Activated CD4-positive, alpha-beta T cell treated with anti-CD3 and anti-CD28 coated beads, Interleukin-2, amount 10 ng/mL, durations not matched to agents 24 days and 14 days (primary cell): ENCODE measurements at regions of chr13 and their contacts with region 1.

Region 1: DNA sequence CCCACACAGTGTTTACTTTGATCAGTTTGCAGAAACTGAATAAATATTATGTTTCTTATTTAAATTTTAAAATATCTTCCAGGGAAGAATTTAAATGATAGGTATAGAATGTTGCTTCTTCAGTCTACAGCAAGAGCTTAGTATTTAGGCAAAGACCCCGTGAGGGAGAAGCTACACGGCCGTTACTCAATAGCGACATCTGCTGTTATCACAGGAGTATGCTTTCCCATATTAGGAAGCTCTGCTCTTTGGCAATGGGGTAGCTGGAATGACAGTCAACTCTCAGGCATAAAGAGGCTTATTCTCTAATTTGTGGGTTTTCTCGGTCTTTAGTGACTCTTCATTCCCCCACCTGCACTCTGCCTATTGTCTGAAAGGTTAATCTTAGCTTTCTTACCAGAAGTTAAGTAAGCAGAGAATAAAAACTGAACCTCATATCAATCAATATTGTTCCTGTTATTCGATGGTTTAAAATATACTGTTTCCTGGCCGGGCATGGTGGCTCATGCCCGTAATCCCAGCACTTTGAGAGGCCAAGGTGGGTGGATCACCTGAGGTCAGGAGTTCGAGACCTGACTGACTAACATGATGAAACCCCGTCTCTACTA is 13.2 kb upstream of the LHFPL6 start:
- DNase-seq: peak; percentile 81
- H3K4me3 Mint-ChIP-seq: no peak overlapping the region
- H3K27ac Mint-ChIP-seq: no peak overlapping the region
- H3K4me1 Mint-ChIP-seq: no peaks in the 10 kb centered on the region
- H3K27me3 Mint-ChIP-seq: peaks cover 24% of the 10 kb centered on the region

Region 2: DNA sequence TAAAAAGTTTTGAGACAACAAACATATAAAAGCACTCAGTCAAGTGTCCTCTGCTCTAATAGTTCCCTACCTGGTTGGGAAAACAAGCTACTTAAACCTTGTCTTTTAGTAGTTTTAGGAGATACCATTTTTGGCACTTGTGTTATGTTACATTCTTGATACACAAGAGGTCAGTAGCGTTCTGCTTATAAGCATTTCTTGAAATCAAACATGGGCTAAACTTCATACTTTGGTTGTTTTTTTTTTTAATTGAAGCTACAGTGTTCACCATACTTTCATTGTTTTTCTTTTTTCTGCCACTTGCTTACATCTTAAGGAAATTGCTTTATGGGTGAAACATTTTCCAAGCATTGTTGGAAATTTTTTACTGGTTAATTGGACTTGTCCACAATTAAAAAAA is 565.0 kb before region 1 on chr13:
- intact Hi-C with region 1: loop called (anchors 1 kb)
- DNase-seq: no peak
- H3K4me3 Mint-ChIP-seq: no peak overlapping the region
- H3K27ac Mint-ChIP-seq: no peak overlapping the region
- H3K4me1 Mint-ChIP-seq: peaks cover 2% of the 10 kb centered on the region
- H3K27me3 Mint-ChIP-seq: no peaks in the 10 kb centered on the region

Region 3: DNA sequence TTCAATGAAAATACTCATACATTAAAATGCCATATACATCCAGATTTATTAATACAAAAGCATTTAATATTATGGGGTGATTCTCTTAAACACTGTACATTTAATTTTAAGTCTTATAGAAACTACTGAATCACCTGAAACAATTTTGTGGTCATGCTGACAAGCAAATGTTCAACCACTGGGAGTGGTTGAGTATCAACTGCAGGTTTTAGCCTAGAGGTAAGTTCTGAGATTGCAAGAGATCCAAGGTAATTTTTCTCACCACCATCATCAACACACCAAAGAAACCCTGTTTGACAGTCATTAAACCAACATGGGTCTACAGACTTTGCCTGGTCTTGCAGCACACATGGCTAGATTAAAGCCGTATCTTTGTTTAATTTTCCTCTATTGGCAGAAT is 209.5 kb before region 1 on chr13:
- intact Hi-C with region 1: loop called (anchors 10 kb)
- DNase-seq: no peak
- H3K4me3 Mint-ChIP-seq: no peak overlapping the region
- H3K27ac Mint-ChIP-seq: no peak overlapping the region
- H3K4me1 Mint-ChIP-seq: no peaks in the 10 kb centered on the region
- H3K27me3 Mint-ChIP-seq: peaks cover 8% of the 10 kb centered on the region

Region 4: DNA sequence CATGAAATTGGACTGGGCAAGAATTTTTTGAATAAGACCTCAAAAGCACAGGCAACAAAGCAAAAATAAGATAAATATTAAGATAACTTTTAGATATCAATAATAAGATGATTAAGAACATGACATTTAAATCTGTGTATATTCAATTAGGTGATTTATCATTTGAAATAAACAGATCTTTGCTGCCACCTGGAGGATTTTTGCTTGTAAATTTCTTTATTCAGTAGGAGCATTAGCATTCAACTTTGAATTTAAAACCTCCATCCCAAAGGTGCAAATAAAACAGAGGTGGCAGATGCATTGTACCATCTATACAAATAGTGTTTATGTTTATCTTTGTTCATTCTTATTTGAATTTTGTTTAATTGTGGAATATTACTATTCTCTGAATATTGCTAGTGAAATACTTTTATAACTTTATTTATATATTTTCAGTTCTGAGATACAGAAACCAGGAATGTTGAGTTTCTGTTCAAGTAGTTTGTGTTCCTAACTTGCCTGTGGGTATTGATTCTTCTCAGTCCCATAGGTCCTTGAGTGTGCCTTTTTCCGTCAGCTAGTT is 60.2 kb after region 1 on chr13:
- intact Hi-C with region 1: loop called (anchors 5 kb)
- DNase-seq: peak; percentile 73
- H3K4me3 Mint-ChIP-seq: no peak overlapping the region
- H3K27ac Mint-ChIP-seq: no peak overlapping the region
- H3K4me1 Mint-ChIP-seq: no peaks in the 10 kb centered on the region
- H3K27me3 Mint-ChIP-seq: no peaks in the 10 kb centered on the region

Region 5: DNA sequence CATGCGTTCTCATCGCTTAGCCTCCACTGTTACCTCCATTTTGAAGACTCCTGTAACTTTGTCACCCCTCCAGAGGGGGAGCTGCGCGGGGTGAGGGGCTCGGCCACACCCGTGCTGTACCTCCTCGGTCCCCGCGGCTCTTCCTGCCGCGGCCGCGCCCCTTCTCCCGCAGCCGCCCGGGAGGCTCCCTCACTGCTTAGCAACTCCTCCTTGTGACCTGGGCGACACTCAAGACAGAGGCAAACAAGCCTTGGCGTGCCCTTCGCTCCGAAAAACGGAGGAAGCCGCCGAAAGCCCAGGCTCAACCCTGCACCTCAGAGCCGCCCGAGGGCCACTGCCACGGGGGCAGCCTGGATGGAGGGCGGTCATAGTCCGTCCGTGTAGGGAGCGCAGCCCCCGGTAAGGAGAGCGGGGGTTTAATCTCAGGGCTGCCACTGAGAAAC is 556.0 kb after region 1 on chr13:
- intact Hi-C with region 1: no loop called
- DNase-seq: no peak
- H3K4me3 Mint-ChIP-seq: no peak overlapping the region
- H3K27ac Mint-ChIP-seq: no peak overlapping the region
- H3K4me1 Mint-ChIP-seq: peaks cover 16% of the 10 kb centered on the region
- H3K27me3 Mint-ChIP-seq: no peaks in the 10 kb centered on the region